HEK293 (cell line): ENCODE measurements at regions of chr18 and their contacts with region 1.

Region 1: DNA sequence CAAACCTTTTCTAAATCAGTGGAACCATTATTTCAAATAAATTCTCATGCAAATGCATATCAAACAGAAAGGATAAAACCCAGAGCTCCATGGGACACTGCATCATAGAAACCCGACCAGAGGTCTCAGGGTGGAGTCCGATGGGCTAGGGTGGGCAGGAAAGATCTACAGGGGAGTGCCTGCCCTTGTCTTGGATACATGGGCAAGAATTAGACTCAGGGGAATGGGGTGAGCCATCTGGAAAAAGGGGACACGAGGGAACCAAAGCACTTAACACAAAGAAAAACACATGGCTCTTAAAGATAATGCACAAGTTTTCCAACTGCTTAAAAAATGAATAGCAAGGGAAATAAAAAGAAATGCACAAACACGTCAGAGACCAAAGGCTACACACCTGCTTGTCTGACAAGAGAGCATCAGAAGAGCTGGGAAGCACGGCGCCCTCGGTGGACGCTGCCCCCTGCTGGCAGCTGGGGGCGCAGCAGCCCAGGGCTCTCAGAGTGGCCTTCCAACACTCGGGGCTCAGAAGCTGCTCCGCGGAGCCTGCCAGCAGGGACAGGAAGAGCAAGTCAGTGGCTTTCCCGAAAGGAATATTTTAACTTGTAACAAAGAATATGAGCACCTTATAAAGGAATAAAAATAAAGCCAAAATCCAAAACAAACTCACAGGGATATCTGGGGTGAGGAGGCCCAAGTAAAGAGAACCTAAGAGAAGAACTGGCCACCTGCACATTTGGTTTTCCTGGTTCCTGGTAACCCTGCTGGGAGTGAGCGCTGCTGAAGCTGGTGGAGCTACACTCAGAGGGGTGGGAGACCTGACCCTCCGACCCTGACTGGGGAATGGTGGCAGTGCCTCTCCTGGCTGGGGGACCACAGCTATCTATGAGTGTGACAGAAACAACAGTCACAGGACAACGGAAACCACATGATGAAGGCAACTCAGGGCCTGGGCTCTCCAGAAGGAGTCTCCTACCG is 54.5 kb downstream of the SIGLEC15 start:
- H3K4me3 ChIP-seq: no peak overlapping the region
- H3K27ac ChIP-seq: no peak overlapping the region
- H3K4me1 ChIP-seq: no peaks in the 10 kb centered on the region
- CTCF ChIP-seq: peak; percentile 88

Region 2: GRCh38 chr18:45690975-45691815 is 188.8 kb before region 1 on chr18:
- CTCF ChIA-PET with region 1: interaction called, 65 read pairs
- POLR2A ChIA-PET with region 1: no interaction called
- H3K4me3 ChIP-seq: no peak overlapping the region
- H3K27ac ChIP-seq: no peak overlapping the region
- H3K4me1 ChIP-seq: no peaks in the 10 kb centered on the region
- CTCF ChIP-seq: peak; percentile 90

Region 3: GRCh38 chr18:45738658-45739057 is 141.3 kb before region 1 on chr18:
- CTCF ChIA-PET with region 1: interaction called, 10 read pairs
- POLR2A ChIA-PET with region 1: no interaction called
- H3K4me3 ChIP-seq: no peak overlapping the region
- H3K27ac ChIP-seq: no peak overlapping the region
- H3K4me1 ChIP-seq: no peaks in the 10 kb centered on the region
- CTCF ChIP-seq: no peak

Region 4: GRCh38 chr18:45890606-45891005 is 10.6 kb after region 1 on chr18:
- CTCF ChIA-PET with region 1: interaction called, 24 read pairs
- POLR2A ChIA-PET with region 1: no interaction called
- H3K4me3 ChIP-seq: no peak overlapping the region
- H3K27ac ChIP-seq: no peak overlapping the region
- H3K4me1 ChIP-seq: no peaks in the 10 kb centered on the region
- CTCF ChIP-seq: no peak

Region 5: DNA sequence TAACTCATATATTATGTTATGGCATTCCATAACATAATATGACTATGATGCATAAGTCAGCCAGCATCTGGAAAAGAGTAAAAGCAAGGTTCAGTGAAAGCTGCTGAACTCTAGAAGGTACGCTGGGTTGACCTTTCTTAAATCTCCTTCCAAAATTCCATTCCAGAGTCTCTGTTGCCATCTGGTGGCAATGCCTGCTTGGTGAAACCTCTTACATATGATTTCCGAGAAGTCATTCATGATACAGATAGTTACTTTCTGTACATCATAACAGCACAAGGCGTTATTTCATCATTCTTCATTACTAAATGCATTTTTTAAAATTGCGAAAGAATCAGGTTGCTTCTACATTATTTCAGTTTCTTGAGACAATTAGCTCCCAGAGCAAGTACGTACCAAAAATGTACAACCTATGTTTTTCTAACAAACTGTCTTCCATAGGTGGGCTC is 94.1 kb after region 1 on chr18:
- CTCF ChIA-PET with region 1: interaction called, 10 read pairs
- POLR2A ChIA-PET with region 1: interaction called, 5 read pairs
- H3K4me3 ChIP-seq: no peak overlapping the region
- H3K27ac ChIP-seq: no peak overlapping the region
- H3K4me1 ChIP-seq: no peaks in the 10 kb centered on the region
- CTCF ChIP-seq: peak; percentile 62

Region 6: GRCh38 chr18:46028536-46028891 is 148.5 kb after region 1 on chr18:
- CTCF ChIA-PET with region 1: no interaction called
- POLR2A ChIA-PET with region 1: no interaction called
- H3K4me3 ChIP-seq: no peak overlapping the region; the same call in 1 of the 2 replicates
- H3K27ac ChIP-seq: no peak overlapping the region
- H3K4me1 ChIP-seq: peaks cover 2% of the 10 kb centered on the region; the same call in 1 of the 2 replicates
- CTCF ChIP-seq: no peak

Region 7: GRCh38 chr18:46211816-46212215 is 331.8 kb after region 1 on chr18:
- CTCF ChIA-PET with region 1: no interaction called
- POLR2A ChIA-PET with region 1: no interaction called
- H3K4me3 ChIP-seq: no peak overlapping the region
- H3K27ac ChIP-seq: no peak overlapping the region
- H3K4me1 ChIP-seq: peaks cover 14% of the 10 kb centered on the region
- CTCF ChIP-seq: no peak